Activated CD4-positive, alpha-beta memory T cell treated with anti-CD3 and anti-CD28 coated beads for 36 hours (primary cell): ENCODE measurements at regions of chr7 and their contacts with region 1.

Region 1: GRCh38 chr7:36152756-36153570 is at the start of gene EEPD1:
- DNase-seq: peak; percentile 100
- H3K4me3 Mint-ChIP-seq: peak within 1 kb of the TSS; percentile 75
- H3K27ac Mint-ChIP-seq: peak within 1 kb of the TSS; percentile 21
- H3K4me1 Mint-ChIP-seq: peaks cover 27% of the 10 kb centered on the region
- H3K27me3 Mint-ChIP-seq: no peaks in the 10 kb centered on the region
- total RNA-seq, gene EEPD1: 1.2 to 1.3 TPM

Region 2: GRCh38 chr7:35415411-35415822 is 737.5 kb before region 1 on chr7:
- CTCF ChIA-PET with region 1: no interaction called
- POLR2A ChIA-PET with region 1: no interaction called
- intact Hi-C with region 1: no loop called
- DNase-seq: no peak
- H3K4me3 Mint-ChIP-seq: no peak overlapping the region
- H3K27ac Mint-ChIP-seq: no peak overlapping the region
- H3K4me1 Mint-ChIP-seq: no peaks in the 10 kb centered on the region
- H3K27me3 Mint-ChIP-seq: peaks cover 10% of the 10 kb centered on the region

Region 3: GRCh38 chr7:35781200-35781701 is 371.7 kb before region 1 on chr7:
- CTCF ChIA-PET with region 1: no interaction called
- POLR2A ChIA-PET with region 1: no interaction called
- intact Hi-C with region 1: no loop called
- DNase-seq: no peak
- H3K4me3 Mint-ChIP-seq: no peak overlapping the region
- H3K27ac Mint-ChIP-seq: no peak overlapping the region
- H3K4me1 Mint-ChIP-seq: no peaks in the 10 kb centered on the region
- H3K27me3 Mint-ChIP-seq: no peaks in the 10 kb centered on the region

Region 4: DNA sequence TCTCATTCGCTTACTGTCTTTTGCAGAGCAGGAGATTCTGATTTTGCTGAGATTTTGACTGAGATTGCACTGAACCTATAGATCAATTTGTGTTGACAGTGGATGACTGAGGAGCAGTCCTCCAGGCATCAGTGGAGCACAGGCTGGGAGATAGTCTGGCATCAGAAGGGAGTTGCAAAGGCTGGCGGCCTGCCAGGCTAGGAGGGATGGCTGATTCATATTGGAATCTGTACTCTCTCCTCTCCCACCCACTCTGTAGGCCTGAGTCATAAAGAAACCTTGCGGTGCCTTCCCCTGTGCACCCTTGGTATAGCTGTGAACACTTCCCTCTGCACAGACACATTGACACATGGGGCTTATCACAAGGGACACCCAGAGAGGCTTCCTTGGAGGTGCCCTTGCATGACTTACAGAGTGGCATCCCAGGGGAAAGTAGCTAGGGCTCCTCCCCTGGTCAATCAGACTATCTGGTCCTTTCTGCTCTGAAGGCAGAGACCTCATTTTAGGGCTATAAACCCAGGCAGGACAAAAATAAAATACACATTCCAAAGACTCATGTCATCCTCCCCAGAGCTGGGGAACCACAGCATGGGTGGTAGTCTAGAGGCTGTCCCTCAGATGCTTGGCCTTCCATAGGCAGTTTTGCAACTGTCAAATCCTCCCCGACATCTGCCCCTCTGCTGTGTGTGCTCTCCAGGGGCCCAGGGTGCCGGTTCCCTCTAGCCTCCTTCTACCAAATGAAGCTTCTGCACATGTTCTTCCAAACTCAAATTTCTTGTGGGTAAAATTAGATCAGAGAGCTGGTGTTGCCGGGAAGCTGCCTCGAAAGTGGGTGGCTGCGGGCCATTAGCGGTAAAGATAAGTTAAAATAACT is 37.3 kb before region 1 on chr7:
- CTCF ChIA-PET with region 1: no interaction called
- POLR2A ChIA-PET with region 1: interaction called, 3 read pairs
- intact Hi-C with region 1: loop called (anchors 1 kb)
- DNase-seq: peak; percentile 95
- H3K4me3 Mint-ChIP-seq: no peak overlapping the region
- H3K27ac Mint-ChIP-seq: peak overlapping the region; percentile 31
- H3K4me1 Mint-ChIP-seq: peaks cover 36% of the 10 kb centered on the region
- H3K27me3 Mint-ChIP-seq: peaks cover 18% of the 10 kb centered on the region

Region 5: DNA sequence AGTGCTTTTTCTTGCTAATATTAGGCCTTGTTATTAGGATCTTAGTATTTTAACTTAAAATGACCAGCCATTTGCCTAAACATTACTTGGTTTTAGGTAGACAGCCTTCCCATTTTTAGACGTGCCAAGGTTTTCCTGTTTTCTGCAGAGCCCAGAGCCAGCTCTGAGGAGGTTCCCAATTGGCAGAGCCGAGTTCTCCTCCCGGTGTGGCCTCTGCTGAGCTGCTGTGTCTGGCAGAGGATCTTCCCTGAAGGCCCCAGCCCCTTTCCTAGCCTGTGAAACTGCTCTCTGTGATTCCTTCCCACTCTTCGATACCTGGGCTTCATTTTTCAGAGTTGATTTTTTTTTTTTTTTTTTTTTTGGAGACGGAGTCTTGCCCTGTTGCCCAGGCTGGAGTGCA is 91.5 kb after region 1 on chr7:
- CTCF ChIA-PET with region 1: no interaction called
- POLR2A ChIA-PET with region 1: no interaction called
- intact Hi-C with region 1: no loop called
- DNase-seq: no peak
- H3K4me3 Mint-ChIP-seq: no peak overlapping the region
- H3K27ac Mint-ChIP-seq: no peak overlapping the region
- H3K4me1 Mint-ChIP-seq: no peaks in the 10 kb centered on the region
- H3K27me3 Mint-ChIP-seq: no peaks in the 10 kb centered on the region

Region 6: DNA sequence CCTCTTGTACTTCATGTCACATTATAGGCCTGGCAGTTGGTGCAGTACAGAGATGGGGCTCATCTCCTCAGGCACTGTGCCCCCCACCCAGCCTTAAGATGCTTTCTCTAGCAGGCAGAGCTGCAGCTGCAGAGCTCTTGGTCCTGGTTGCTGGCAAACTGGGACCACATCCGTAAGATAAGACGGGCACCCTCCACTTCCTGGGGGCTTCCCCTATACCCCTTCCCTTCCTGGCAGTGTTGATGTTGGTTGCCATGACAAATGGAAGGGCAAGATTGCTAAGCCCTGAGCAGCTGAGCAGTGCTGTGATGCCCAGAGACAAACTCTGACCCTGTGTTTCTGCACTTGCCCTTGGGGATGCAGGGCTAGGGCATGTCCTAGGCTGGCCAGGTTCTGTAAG is 133.3 kb after region 1 on chr7:
- CTCF ChIA-PET with region 1: no interaction called
- POLR2A ChIA-PET with region 1: no interaction called
- intact Hi-C with region 1: loop called (anchors 1 kb)
- DNase-seq: peak; percentile 77
- H3K4me3 Mint-ChIP-seq: no peak overlapping the region
- H3K27ac Mint-ChIP-seq: peak overlapping the region; percentile 93
- H3K4me1 Mint-ChIP-seq: peaks cover 65% of the 10 kb centered on the region
- H3K27me3 Mint-ChIP-seq: no peaks in the 10 kb centered on the region

Region 7: DNA sequence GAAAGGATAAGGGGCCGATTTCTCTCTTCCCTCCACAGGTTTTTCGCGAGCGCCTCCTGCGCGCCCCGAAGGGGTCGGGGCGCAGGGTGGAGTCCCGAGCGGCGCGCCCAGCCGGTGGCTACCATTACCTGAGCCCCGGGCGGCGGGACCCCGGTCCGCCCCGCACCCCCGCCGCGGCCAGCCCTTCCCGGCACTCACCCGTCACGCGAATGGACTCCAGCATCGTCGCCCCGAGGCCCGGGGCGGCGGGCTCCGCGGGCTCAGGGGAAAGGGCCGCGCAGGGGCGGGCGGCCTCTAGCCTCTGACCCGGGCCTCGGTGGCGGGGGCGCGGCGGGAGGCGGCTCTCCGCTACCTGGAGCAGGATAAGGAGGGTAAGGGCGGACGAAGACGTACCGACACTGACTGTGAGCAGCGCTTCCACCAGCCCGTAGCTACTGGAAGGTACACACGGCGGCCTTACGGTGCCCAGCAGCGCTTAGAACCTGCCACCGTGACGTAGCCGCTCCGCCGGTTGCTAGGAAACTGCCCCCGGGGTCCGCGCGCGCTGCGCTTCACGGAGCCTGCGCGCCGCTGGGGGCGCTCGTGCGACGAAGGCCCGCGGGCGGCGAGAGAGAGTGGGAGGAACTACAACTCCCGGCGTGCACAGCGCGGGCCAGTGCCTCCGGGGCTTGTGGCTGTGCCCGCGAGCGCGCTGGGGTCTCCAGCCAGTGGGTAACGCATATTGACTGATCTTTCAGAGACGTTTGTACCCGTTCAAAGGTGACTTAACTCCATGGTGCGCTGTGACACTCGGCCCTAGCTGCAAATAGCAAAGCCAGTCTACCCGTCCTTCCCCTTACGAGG is 214.0 kb after region 1 on chr7:
- CTCF ChIA-PET with region 1: no interaction called
- POLR2A ChIA-PET with region 1: no interaction called
- intact Hi-C with region 1: loop called (anchors 1 kb)
- DNase-seq: peak; percentile 94
- H3K4me3 Mint-ChIP-seq: peak overlapping the region; percentile 88
- H3K27ac Mint-ChIP-seq: no peak overlapping the region
- H3K4me1 Mint-ChIP-seq: no peaks in the 10 kb centered on the region
- H3K27me3 Mint-ChIP-seq: peaks cover 2% of the 10 kb centered on the region

Region 8: DNA sequence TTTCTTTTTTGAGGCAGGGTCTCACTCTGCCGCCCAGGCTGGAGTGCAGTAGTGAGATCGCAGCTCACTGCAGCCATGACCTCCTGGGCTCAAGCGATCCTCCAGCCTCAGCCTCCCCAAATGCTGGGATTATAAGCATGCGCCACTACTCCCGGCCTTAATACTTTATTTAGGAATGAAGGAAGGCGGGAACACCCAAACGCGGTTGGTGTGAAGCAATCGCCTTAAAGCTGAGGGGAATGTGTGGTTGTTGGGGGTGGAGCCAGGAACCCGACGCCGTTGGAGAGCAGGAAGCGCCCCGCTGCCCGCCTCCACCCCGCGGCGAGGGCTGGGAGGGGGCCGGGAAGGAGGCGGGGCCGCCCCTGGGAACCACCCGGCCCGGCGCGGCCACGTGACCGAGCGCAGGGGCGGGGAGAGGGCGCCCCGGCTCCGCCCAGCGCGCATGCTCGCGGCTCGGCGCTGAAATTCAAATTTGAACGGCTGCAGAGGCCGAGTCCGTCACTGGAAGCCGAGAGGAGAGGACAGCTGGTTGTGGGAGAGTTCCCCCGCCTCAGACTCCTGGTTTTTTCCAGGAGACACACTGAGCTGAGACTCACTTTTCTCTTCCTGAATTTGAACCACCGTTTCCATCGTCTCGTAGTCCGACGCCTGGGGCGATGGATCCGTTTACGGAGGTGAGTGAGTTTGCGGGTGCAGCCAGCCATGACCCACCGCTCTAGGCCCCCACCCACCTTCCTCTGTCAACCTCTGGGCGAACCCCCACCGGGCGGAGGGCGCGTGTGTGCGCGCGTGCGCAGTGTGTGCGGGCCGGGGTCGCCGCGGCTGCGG is 236.6 kb after region 1 on chr7 and contains the start of gene ANLN:
- CTCF ChIA-PET with region 1: no interaction called
- POLR2A ChIA-PET with region 1: no interaction called
- intact Hi-C with region 1: loop called (anchors 2 kb)
- DNase-seq: peak; percentile 91
- H3K4me3 Mint-ChIP-seq: peak within 1 kb of the TSS; percentile 93
- H3K27ac Mint-ChIP-seq: peak within 1 kb of the TSS; percentile 88
- H3K4me1 Mint-ChIP-seq: peaks cover 24% of the 10 kb centered on the region
- H3K27me3 Mint-ChIP-seq: no peaks in the 10 kb centered on the region
- total RNA-seq, gene ANLN: 46.6 to 54.7 TPM